Ascending aorta (tissue), 2 donors: ENCODE measurements at regions of chr1 and their contacts with region 1.

Region 1: GRCh38 chr1:8848663-8849386 is 29.7 kb downstream of the ENO1 start:
- DNase-seq: peak; percentile 78 to 95
- H3K4me3 ChIP-seq: no peak overlapping the region
- H3K27ac ChIP-seq: peak overlapping the region; percentile 55 to 59
- H3K4me1 ChIP-seq: peaks cover 0 to 27% of the 10 kb centered on the region in 2 donors
- H3K27me3 ChIP-seq: no peaks in the 10 kb centered on the region
- CTCF ChIP-seq: peak; percentile 85 to 92 (median 87)

Region 2: GRCh38 chr1:8560611-8561544 is 287.9 kb before region 1 on chr1:
- intact Hi-C with region 1: loop called (anchors 5 kb)
- DNase-seq: no peak
- H3K4me3 ChIP-seq: no peak overlapping the region
- H3K27ac ChIP-seq: no peak overlapping the region
- H3K4me1 ChIP-seq: peaks cover 0 to 5% of the 10 kb centered on the region in 2 donors
- H3K27me3 ChIP-seq: no peaks in the 10 kb centered on the region
- CTCF ChIP-seq: peak; percentile 84 to 87 (median 87)

Region 3: DNA sequence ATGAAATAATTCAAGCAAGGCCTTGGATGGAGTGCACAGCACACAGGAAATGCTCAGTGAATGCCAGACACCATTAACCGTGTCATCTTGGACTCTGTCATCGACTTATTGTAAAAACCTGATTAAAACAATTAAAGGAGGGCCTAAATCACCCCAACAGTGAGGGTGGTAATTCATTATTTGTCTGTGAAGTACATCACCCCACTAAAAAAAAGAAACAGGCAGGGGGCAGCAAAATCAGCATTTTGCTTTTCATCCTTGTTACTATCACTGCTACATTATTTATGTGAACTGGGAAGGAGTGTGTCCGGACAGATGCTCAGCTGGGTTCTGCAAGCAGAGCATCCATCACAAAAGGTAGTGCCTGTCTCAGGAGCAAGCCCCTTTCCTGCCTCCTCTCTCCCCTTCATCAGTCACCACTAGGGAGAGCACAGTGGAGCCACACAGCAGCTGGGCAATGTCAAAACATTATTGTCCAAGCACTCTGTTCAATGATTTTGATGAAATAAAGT is 129.9 kb before region 1 on chr1:
- intact Hi-C with region 1: loop called (anchors 5 kb)
- DNase-seq: no peak
- H3K4me3 ChIP-seq: no peak overlapping the region
- H3K27ac ChIP-seq: no peak overlapping the region
- H3K4me1 ChIP-seq: no peaks in the 10 kb centered on the region
- H3K27me3 ChIP-seq: no peaks in the 10 kb centered on the region
- CTCF ChIP-seq: peak in 1 of 3 experiments; percentile 22

Region 4: DNA sequence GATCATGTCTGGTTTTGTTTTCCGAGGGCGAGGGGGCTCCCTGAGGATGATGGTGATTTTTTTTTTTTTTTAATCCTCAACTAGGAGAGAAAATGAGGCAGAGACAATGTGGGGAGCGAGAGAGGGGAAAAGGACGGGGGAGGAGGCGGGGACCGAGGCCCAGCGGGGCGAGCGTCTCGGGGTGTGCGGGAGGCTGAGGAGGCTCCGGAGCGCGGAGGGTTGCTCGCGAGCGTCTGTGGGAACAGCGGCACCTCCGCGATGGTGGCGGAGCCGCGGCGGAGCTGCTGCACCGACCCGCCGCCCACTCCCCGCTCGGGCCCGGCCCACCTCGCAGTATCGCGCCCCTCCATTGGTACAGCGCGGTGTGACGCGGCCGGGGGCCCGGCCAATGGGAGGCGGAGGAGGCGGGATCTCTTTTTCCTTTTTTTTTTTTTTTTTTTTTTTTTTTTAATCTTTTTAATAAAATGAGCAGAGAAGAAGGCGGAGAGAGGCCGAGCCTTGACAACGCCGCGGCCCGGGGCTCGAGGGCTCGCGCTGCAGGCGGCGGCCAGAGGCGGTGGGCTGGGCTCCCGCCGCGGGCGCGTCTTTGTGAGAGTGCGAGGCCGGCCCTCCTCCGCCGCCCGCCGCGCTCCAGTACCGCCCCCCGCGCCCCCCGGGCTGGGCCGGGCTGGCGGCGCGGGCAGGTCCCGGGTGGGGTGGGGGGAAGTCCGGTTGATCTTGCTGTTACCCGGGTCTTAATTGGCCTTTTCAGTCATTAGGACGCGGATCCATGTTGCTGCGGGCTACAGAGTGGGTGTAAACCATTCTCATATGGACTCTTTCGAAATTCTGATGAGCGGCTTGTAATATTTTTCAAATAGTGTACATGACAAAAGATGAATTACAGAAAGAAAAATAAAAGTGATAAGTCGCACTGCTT is 31.2 kb before region 1 on chr1 and contains the start of gene RERE:
- intact Hi-C with region 1: loop called (anchors 2 kb)
- DNase-seq: peak; percentile 76 to 96
- H3K4me3 ChIP-seq: peak within 1 kb of the TSS; percentile 60 to 98
- H3K27ac ChIP-seq: peak within 1 kb of the TSS; percentile 83 to 96
- H3K4me1 ChIP-seq: peaks cover 0 to 6% of the 10 kb centered on the region in 2 donors
- H3K27me3 ChIP-seq: no peaks in the 10 kb centered on the region
- CTCF ChIP-seq: peak in 1 of 3 experiments; percentile 7
- total RNA-seq, gene RERE: 64.6 TPM